Left colon (tissue), 2 donors: ENCODE measurements at regions of chr5 and their contacts with region 1.

Region 1: GRCh38 chr5:10627160-10627701 is 63.4 kb downstream of the ANKRD33B start:
- DNase-seq: no peak
- ATAC-seq: peak; percentile 3

Region 2: DNA sequence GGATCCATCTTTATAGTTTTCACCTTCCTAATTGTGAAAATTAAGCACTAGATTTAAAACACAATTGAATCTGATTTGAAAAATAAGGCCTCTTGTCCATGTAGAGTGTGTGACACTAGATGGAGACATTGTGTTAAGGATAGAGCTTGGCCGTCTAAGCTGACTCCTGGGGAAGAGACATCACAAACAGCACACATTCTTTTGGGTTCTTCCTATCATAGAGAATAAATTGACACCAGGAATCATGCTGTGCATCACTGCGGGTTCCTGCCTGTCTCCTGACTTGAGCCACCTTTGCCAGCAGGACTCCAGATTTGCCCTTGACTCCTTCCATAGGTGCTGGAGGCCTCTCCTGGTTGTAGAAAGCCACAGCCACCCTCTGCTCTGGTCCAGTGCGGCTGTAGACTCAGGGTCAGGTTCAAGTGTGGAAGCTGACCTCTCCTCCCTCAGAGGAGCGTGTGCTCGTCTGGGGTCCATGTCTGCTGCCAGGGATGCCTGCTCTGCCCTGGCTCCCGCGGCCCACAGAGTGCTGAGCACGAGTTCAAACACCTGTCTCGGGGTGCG is 174.4 kb before region 1 on chr5:
- intact Hi-C with region 1: loop called (anchors 5 to 10 kb)
- DNase-seq: no peak
- ATAC-seq: peak; percentile 91